ENCODE measurements at regions of chr5 and their contacts with region 1.

Region 1: DNA sequence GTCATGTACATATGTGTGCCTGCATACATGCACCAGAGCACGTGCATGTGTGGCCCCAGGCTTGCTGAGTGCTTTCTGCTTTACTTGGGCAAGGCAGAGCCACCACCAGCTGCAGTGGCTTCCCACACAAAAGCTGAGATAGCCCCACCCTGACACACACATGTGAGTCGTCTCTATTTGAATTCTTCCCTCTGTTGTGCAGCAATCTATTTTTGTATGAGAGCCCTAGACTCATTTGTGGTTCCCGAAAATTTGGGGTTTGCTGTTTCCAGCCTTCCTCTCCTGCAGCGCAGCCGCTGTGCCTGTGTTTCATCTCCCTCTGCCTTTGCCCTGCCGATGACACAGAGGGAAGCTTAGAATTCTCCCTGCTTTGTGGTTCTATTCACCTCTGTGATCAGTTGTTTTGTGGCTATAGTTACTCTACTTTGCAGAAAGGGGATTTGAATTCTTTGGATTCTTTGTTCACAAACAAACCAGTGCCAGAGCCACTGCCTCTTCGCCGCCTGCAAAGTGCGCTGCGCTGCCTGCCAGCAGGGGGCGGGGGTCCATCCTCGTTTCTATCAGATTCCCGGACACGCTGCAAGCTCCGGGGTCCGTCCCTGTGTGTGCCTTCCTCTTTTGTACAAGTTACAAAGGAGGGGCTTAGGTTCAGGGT is 95.8 kb upstream of the DAP start:
- DNase-seq: peak; percentile 30 to 76 (median 53)
- ATAC-seq: peak; percentile 35 to 79 (median 64)
- H3K4me3 ChIP-seq: no peak overlapping the region
- H3K27ac ChIP-seq: no peak overlapping the region
- H3K4me1 ChIP-seq: no peaks in the 10 kb centered on the region
- H3K27me3 ChIP-seq: no peaks in the 10 kb centered on the region
- CTCF ChIP-seq: peak; percentile 49 to 74 (median 64)

Region 2: DNA sequence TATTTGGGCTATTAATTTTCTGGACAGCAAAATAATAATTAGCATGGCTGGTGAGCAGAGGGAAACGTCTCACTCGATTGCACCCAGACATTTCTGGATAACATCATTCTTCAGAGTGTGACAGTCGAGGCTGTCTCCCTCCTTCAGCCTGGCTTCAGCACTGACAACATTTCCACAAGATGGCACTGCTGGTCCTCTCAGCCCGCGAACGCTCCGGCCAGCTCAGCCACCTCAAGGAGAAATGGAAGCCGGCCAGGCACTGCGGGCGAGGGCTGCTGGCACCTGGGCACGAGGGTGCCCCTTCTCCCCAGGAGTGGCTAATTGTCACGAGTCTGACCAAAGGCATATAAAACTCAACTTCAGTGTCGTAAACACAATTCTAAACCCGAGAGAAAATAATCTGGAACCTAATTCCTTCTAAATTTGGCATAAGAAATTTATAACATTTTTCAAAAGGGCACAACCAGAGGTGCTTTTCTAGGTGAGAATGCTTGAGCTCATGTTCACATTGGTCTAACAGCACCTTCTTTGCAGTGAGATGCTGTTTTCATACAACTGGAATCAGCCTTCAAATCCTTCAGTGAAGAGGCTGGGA is 161.7 kb before region 1 on chr5:
- intact Hi-C with region 1: loop called in 2 of 3 experiments (anchors 10 kb)
- DNase-seq: peak; percentile 76 to 91 (median 81)
- ATAC-seq: peak; percentile 86 to 97 (median 94)
- H3K4me3 ChIP-seq: no peak overlapping the region
- H3K27ac ChIP-seq: peak overlapping the region in 2 of 4 donors; percentile 15 to 25
- H3K4me1 ChIP-seq: peaks cover 3 to 22% (median 22%) of the 10 kb centered on the region in 3 donors
- H3K27me3 ChIP-seq: no peaks in the 10 kb centered on the region
- CTCF ChIP-seq: peak; percentile 20 to 78 (median 70)

Region 3: DNA sequence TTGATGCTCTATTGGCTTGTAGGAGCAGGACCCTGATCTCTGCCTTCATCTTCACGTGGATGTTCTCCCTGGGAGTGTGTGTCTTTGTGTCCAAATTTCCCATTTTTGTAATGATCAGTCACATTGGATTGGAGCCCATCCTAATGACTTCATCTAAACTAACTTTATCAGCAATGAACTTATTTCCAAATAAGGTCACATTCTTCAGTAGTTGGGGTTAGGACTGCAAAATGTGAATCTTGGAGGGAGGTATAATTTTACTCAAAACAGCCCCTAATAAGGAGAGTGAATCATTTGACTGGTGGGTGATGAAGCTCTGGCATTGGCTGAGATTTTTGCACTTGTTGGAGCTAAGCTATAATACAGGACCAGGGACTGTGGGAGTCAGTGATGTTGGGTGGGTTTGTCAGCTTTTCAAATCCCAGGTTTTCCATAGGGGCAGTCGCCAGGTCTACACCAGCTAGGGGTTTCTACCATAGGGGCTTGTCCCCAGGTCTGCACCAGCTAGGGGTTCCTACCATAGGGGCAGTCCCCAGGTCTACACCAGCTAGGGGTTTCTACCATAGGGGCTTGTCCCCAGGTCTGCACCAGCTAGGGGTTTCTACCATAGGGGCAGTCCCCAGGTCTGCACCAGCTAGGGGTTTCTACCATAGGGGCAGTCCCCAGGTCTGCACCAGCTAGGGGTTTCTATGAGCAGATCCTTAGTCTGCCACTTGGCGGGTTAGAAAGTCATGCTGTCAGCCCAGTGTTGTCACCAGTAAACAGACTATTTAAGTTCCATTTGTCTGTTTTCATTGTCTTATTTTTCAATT is 286.9 kb after region 1 on chr5:
- intact Hi-C with region 1: no loop called
- DNase-seq: no peak
- ATAC-seq: no peak
- H3K4me3 ChIP-seq: no peak overlapping the region
- H3K27ac ChIP-seq: no peak overlapping the region
- H3K4me1 ChIP-seq: no peaks in the 10 kb centered on the region
- H3K27me3 ChIP-seq: no peaks in the 10 kb centered on the region
- CTCF ChIP-seq: no peak

Measured in pancreas (tissue), 10 donors.